ENCODE measurements at regions of chr2 and their contacts with region 1.

Region 1: GRCh38 chr2:218395797-218396687 is 3.6 kb upstream of the CTDSP1 start:
- DNase-seq: peak; percentile 96
- H3K4me3 ChIP-seq: peak overlapping the region; percentile 88 to 92
- H3K27ac ChIP-seq: peak overlapping the region; percentile 95 to 98
- H3K4me1 ChIP-seq: peaks cover 15 to 26% of the 10 kb centered on the region in 2 experiments; a peak in 3 of 4 replicates
- H3K27me3 ChIP-seq: no peaks in the 10 kb centered on the region
- CTCF ChIP-seq: peak; percentile 83
- EP300 ChIP-seq: no peak
- RAD21 ChIP-seq: peak; percentile 67

Region 2: GRCh38 chr2:218286570-218287459 is 109.2 kb before region 1 on chr2:
- CTCF ChIA-PET with region 1: interaction called, 15 read pairs
- POLR2A ChIA-PET with region 1: interaction called, 3 read pairs
- DNase-seq: peak; percentile 73
- H3K4me3 ChIP-seq: peak overlapping the region; percentile 48 to 64
- H3K27ac ChIP-seq: peak overlapping the region; percentile 88 to 99
- H3K4me1 ChIP-seq: peaks cover 12 to 33% of the 10 kb centered on the region in 2 experiments; a peak in 3 of 4 replicates
- H3K27me3 ChIP-seq: no peaks in the 10 kb centered on the region
- CTCF ChIP-seq: no peak
- EP300 ChIP-seq: no peak
- RAD21 ChIP-seq: no peak

Region 3: DNA sequence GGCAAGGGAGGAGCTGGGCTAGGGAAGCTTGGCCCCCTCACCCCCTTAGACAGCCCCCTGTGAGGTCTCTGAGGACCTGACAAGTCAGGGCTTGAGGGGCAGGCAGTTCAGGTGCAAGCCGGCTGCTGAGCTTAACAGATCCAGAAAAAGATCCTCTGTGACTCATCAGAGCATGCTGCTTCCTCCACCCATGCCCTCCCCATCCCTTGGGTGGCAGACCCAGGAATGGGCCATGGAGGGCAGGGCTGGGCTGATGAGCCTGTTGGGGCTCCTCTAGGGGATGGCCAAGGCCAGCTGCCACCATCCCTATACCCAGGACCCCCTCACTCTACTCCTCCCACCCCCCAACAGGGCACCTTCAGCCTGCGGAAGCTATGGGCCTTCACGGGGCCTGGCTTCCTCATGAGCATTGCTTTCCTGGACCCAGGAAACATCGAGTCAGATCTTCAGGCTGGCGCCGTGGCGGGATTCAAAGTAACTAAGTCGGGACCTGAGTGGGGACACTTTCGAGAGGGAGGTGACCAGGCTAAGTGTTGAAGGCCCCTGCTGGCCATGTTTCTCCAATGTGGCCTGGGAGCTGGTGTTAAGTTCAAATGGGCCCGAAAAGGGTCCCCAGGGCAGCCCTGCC is 12.0 kb before region 1 on chr2:
- CTCF ChIA-PET with region 1: interaction called, 20 read pairs
- POLR2A ChIA-PET with region 1: no interaction called
- DNase-seq: no peak
- H3K4me3 ChIP-seq: no peak overlapping the region
- H3K27ac ChIP-seq: no peak overlapping the region
- H3K4me1 ChIP-seq: no peaks in the 10 kb centered on the region; a peak in 2 of 4 replicates
- H3K27me3 ChIP-seq: no peaks in the 10 kb centered on the region
- CTCF ChIP-seq: no peak
- EP300 ChIP-seq: no peak
- RAD21 ChIP-seq: no peak

Region 4: DNA sequence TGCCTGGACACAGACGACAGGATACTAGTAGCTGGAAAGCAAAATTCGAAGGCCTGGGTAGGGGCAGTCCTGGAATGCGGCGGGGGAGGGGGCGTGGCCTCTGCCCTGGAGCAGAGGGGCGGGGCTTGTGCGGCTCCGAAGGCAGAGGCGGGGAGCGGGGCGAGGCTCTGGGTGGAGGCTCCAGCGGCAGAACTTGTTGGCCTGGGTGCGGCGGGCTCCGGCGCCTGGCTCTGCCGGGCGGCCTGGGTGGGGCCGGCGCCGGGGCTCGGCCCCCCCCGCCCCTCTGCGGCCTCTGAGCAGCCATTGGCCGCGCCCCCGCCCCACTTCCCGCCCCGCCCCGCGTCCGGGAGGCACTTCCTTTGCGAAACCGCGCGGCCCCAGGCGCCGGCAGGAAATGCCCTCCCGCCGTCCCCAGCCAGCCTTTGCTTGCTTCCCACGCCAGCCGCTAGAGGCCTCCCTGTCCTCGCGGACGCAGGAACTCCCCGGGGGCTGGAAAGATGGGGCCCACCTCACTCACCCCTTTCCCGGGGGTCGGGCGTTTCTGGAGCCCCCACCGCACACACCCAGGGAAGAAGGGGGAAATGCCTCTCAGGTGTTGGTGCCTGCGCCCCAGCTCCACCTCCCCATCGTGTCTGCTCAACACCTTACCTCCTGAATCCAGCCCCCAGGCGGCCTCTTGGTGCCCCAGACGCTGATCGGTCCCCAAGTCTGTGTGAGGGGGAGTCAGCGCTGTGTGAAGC is 10.3 kb after region 1 on chr2:
- CTCF ChIA-PET with region 1: interaction called, 18 read pairs
- POLR2A ChIA-PET with region 1: interaction called, 5 read pairs
- DNase-seq: peak; percentile 97
- H3K4me3 ChIP-seq: peak overlapping the region; percentile 48 to 58
- H3K27ac ChIP-seq: peak overlapping the region; percentile 71 to 93
- H3K4me1 ChIP-seq: peaks cover 10 to 20% of the 10 kb centered on the region in 2 experiments; a peak in 2 of 4 replicates
- H3K27me3 ChIP-seq: no peaks in the 10 kb centered on the region
- CTCF ChIP-seq: peak; percentile 78
- EP300 ChIP-seq: no peak; a peak in 1 of 4 replicates
- RAD21 ChIP-seq: peak; percentile 80

Region 5: GRCh38 chr2:218448934-218449333 is 52.9 kb after region 1 on chr2:
- CTCF ChIA-PET with region 1: no interaction called
- POLR2A ChIA-PET with region 1: no interaction called
- DNase-seq: no peak
- H3K4me3 ChIP-seq: no peak overlapping the region
- H3K27ac ChIP-seq: no peak overlapping the region
- H3K4me1 ChIP-seq: no peaks in the 10 kb centered on the region; a peak in 1 of 4 replicates
- H3K27me3 ChIP-seq: no peaks in the 10 kb centered on the region
- CTCF ChIP-seq: no peak
- EP300 ChIP-seq: no peak
- RAD21 ChIP-seq: no peak

Region 6: GRCh38 chr2:218679119-218679518 is 283.1 kb after region 1 on chr2:
- CTCF ChIA-PET with region 1: no interaction called
- POLR2A ChIA-PET with region 1: no interaction called
- DNase-seq: no peak
- H3K4me3 ChIP-seq: no peak overlapping the region
- H3K27ac ChIP-seq: no peak overlapping the region
- H3K4me1 ChIP-seq: no peaks in the 10 kb centered on the region
- H3K27me3 ChIP-seq: no peaks in the 10 kb centered on the region
- CTCF ChIP-seq: no peak
- EP300 ChIP-seq: no peak
- RAD21 ChIP-seq: no peak